Posterior cingulate gyrus (tissue), 11 donors: ENCODE measurements at regions of chr9 and their contacts with region 1.

Region 1: DNA sequence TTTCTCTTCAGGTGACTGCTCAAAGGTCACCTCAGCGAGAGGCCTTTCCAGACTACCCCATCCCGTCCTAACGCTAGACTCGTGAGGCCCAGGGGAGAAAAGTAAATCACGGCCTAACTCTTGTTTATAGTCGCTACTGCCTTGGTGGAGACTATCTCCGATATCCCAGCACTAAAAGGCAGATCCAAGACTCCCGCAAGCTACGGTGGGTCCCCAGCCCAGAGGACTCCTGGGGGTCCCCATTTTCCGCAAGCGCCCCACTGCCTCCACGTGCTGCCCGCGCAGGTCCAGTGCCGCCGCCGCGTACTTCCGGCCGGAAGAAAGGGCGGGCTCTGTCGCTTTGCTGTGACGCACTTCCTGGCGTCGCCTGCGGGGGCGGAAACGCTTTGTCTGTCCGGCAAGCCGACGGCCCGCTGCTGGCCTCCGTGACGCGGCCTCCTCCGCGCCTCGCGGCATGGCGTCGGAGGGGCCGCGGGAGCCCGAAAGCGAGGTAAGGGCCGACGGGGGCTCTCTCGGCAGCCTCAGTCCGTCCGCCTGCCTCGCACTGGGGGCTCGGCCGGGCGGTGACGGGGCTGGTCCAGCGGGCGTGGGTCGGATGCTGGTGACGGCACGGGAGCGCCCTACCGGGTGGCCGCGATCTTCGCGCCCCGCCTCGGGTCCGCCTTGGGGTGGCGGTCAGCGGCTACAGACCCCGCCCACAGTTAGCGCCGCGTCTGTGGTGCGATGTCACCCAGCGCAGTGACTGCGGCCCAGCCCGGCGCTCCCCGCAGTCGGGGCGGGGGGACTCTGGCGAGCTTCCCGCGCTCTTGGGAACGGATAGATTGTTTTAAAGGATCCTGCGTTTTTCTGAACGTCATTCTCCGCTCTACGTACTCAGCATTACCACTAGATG is at the start of gene SECISBP2:
- DNase-seq: peak; percentile 90 to 99 (median 94)

Region 2: GRCh38 chr9:89179895-89180667 is 138.3 kb before region 1 on chr9:
- intact Hi-C with region 1: loop called (anchors 10 kb)
- DNase-seq: peak; percentile 84 to 99 (median 93)

Region 3: GRCh38 chr9:89388084-89388867 is 69.9 kb after region 1 on chr9:
- intact Hi-C with region 1: no loop called
- DNase-seq: peak in 1 of 10 donors; percentile 83